Heart left ventricle (tissue), 16 donors: ENCODE measurements at regions of chr21 and their contacts with region 1.

Region 1: DNA sequence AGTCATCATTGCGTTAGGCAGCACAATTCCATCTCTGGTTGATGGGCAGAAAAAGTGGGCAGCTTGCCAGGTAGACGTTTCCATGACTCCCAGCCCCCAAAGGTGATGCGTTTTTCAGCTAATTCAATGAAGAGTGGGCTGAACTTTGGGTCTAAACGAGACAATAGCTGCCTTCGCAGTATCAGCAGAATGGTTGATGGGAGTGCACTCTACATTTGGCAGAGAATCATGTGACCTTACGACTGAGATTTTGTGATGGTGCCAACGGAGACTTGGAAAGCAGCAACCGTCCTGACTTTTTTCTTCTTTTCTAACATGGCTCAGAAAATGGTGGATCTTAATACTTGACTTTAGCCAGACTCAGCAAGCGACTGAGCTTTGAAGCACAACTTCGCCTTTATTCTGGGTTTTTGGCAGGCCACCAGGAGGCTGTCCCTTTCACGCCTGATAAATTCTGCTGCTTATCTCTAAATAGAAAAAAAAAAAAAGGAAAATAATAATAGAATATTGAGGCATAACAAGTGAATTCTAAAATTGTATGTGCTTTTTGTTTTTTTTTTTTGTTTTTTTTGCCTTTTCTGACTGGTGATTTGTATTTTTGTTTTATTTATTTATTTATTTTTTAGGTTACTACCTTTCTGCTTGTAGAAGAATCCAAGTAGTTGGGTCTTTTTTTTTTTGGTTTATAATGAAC is 804.8 kb downstream of the USP25 start:
- DNase-seq: peak; percentile 70 to 83 (median 80)
- ATAC-seq: peak; percentile 62 to 77 (median 69)
- H3K4me3 ChIP-seq: peak overlapping the region; percentile 2 to 62 (median 54)
- H3K27ac ChIP-seq: peak overlapping the region; percentile 78 to 92 (median 84)
- H3K4me1 ChIP-seq: peaks cover 0 to 33% (median 9%) of the 10 kb centered on the region in 12 donors
- H3K27me3 ChIP-seq: no peaks in the 10 kb centered on the region
- CTCF ChIP-seq: no peak
- POLR2A ChIP-seq: no peak

Region 2: DNA sequence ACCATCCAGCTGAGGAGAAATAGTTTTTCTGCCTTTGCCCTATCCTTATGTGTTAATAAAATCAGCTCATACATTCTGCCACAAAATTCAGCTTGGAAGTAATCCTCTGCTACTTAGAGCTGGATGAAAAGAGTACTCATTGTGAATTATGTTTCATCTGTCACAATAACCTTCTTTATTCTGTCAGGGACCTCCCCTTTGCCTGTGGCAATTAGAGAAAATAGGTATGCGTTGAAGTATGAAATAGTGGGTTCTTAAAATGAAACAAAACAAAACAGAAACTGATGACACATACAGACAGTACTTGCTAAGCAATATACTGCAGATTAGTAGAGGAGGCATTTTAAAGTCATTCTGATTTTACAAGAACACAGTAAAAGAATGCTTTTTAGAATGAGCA is 226.3 kb before region 1 on chr21:
- intact Hi-C with region 1: loop called in 1 of 10 experiments (anchors 5 kb)
- DNase-seq: no peak
- ATAC-seq: peak in 1 of 4 donors; percentile 44
- H3K4me3 ChIP-seq: peak overlapping the region in 10 of 12 donors; percentile 12 to 53 (median 34)
- H3K27ac ChIP-seq: peak overlapping the region; percentile 1 to 74 (median 62)
- H3K4me1 ChIP-seq: peaks cover 0 to 9% (median 0%) of the 10 kb centered on the region in 12 donors
- H3K27me3 ChIP-seq: no peaks in the 10 kb centered on the region
- CTCF ChIP-seq: no peak
- POLR2A ChIP-seq: no peak

Region 3: DNA sequence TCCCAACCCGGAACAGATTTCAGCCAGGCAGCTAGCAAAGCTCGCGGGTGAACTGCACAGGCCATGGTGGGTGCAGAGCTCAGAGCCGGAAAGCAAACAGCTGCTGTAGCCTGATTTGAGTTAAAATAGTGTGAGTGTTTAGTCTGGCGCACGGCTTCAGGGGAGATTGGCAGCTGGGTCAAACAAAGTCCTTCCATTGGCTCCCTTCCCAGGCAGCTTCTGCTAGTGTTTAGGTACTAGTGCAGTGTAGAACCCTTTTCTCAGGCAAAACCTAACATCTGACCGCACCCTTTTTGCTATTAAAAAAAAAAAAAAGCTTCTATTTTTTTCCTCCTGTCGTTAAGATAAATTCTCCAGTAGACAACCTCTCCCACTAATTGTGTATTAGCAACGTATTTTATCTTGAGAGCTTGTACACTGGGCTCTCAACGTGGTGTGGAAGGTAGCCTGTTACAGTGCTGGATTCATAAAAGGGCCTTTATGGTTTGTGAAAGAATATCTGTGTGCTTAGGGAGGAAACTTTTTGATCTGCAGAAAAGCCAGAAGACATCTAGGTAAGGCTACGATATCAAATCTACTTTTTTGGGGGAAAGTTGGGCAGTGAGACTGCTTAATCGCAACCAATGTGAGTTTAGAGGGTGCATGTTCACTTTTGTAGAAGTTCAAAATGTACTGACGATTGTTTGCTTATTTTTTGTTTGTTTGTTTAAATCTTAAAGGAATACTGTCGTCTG is 115.2 kb before region 1 on chr21:
- intact Hi-C with region 1: loop called (anchors 2 to 10 kb)
- DNase-seq: peak; percentile 78 to 90 (median 85)
- ATAC-seq: peak; percentile 85 to 96 (median 93)
- H3K4me3 ChIP-seq: peak overlapping the region; percentile 11 to 67 (median 54)
- H3K27ac ChIP-seq: peak overlapping the region; percentile 73 to 89 (median 86)
- H3K4me1 ChIP-seq: peaks cover 0 to 18% (median 7%) of the 10 kb centered on the region in 12 donors
- H3K27me3 ChIP-seq: no peaks in the 10 kb centered on the region
- CTCF ChIP-seq: no peak
- POLR2A ChIP-seq: no peak

Region 4: DNA sequence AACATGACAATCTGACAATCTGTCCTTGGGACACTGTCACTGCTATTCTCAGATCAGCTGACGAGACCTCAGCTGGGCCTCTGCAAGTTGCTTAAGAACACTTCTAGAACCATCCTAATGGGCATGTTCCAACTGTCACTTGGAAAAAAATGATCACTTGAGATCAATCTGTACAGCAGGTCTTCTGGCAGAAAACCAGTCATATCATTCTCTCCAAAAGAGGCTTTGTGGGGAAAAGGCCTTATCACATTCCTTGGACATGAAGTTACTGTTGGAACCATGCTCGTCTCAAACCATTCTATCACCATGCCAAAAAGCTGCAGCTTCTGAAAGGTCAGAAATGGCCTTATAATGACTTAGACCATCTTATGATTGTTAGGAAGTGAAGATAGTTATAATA is 60.6 kb before region 1 on chr21:
- intact Hi-C with region 1: loop called in 3 of 10 experiments (anchors 5 to 10 kb)
- DNase-seq: peak in 2 of 5 donors; percentile 13 to 28
- ATAC-seq: peak; percentile 51 to 87 (median 74)
- H3K4me3 ChIP-seq: no peak overlapping the region
- H3K27ac ChIP-seq: peak overlapping the region; percentile 18 to 73 (median 59)
- H3K4me1 ChIP-seq: peaks cover 0 to 64% (median 29%) of the 10 kb centered on the region in 12 donors
- H3K27me3 ChIP-seq: no peaks in the 10 kb centered on the region
- CTCF ChIP-seq: no peak
- POLR2A ChIP-seq: no peak

Region 5: DNA sequence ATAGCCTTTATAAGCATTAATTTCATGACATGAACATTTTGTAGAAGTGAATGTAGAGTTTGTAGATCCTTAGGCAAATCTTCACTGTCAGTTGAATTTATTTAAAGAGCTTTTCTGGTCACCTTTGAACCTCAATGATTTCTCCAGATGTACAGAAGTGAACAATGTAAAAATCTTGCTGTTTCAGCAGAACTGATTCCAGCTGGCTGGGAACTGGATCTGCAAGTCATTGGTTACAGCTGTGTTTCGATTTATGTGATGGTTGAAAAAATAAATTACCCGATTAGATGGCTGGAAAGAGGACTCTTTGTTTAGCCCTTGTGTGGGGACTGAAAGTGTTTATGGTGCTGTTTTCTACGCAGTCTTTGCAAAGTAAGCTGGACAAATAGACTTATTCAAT is 45.0 kb after region 1 on chr21:
- intact Hi-C with region 1: loop called in 2 of 10 experiments (anchors 5 to 10 kb)
- DNase-seq: peak in 1 of 5 donors; percentile 23
- ATAC-seq: peak in 2 of 4 donors; percentile 62 to 76
- H3K4me3 ChIP-seq: peak overlapping the region in 5 of 12 donors; percentile 0 to 15 (median 9)
- H3K27ac ChIP-seq: peak overlapping the region in 8 of 12 donors; percentile 3 to 44 (median 20)
- H3K4me1 ChIP-seq: peaks cover 4 to 38% (median 19%) of the 10 kb centered on the region in 12 donors
- H3K27me3 ChIP-seq: no peaks in the 10 kb centered on the region
- CTCF ChIP-seq: no peak
- POLR2A ChIP-seq: no peak

Region 6: DNA sequence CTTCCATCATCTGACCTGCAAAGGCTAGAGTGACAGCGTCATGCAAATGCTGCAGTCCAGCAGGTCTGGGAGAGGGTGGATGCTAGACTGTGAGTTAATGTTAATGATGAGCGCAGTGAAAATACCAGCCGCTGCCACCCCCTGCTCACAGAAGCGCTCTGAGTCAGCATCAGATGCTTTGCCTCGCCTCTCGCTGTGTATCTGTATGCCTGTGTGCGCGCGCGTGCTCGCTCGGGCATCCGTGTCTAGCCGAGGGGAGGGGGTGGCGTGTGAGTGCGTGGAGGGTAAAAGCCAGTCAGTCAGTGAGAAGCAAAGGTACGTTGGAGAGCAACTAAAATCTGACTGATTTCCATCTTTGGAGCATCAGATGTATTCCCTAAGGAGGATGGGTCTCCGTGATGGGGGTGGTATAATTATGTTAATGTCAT is 53.9 kb after region 1 on chr21:
- intact Hi-C with region 1: loop called in 2 of 10 experiments (anchors 5 to 10 kb)
- DNase-seq: peak; percentile 45 to 74 (median 59)
- ATAC-seq: peak; percentile 79 to 94 (median 90)
- H3K4me3 ChIP-seq: peak overlapping the region in 11 of 12 donors; percentile 16 to 53 (median 45)
- H3K27ac ChIP-seq: peak overlapping the region in 11 of 12 donors; percentile 33 to 76 (median 67)
- H3K4me1 ChIP-seq: peaks cover 0 to 40% (median 19%) of the 10 kb centered on the region in 12 donors
- H3K27me3 ChIP-seq: no peaks in the 10 kb centered on the region
- CTCF ChIP-seq: no peak
- POLR2A ChIP-seq: no peak